Motor neuron (in vitro differentiated cells): ENCODE measurements at regions of chr1 and their contacts with region 1.

Region 1: GRCh38 chr1:89762779-89763648 is 57.8 kb upstream of the LRRC8D start:
- ATAC-seq: peak; percentile 98 to 100 (median 100)
- H3K4me3 ChIP-seq: peak overlapping the region; percentile 32 to 43 (median 38)
- H3K27ac ChIP-seq: no peak overlapping the region
- H3K4me1 ChIP-seq: no peaks in the 10 kb centered on the region

Region 2: DNA sequence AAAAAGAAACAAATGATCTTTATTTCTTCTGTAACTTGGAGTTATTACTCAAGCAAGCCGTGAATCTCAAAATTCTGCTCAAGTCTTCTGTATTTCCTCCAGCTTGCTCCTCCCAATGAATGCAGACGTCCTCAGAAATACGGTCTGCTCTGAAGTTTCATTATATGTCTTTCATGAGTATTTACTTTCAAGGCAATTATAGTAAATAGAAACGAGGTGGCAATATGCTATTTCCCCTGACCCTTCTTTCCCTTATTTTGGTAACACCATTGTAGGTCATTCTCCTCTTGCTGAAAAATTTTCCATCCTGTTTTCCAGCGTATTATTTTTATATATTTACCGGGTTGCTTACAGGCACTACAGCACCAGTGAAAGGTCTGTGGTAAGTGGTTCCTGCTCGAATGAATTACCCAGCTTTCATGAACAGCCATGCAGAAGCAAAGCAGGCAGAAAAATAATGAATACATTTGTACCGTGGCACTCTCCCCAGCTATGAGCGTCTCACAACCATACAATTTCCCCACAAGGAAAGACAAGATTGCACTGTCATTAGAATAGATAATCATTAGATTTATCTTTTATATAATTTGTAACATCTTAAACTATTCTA is 1429.8 kb before region 1 on chr1:
- in situ Hi-C with region 1: no loop called
- ATAC-seq: no peak
- H3K4me3 ChIP-seq: no peak overlapping the region
- H3K27ac ChIP-seq: no peak overlapping the region
- H3K4me1 ChIP-seq: peaks cover 0 to 5% of the 10 kb centered on the region in 2 donors

Region 3: DNA sequence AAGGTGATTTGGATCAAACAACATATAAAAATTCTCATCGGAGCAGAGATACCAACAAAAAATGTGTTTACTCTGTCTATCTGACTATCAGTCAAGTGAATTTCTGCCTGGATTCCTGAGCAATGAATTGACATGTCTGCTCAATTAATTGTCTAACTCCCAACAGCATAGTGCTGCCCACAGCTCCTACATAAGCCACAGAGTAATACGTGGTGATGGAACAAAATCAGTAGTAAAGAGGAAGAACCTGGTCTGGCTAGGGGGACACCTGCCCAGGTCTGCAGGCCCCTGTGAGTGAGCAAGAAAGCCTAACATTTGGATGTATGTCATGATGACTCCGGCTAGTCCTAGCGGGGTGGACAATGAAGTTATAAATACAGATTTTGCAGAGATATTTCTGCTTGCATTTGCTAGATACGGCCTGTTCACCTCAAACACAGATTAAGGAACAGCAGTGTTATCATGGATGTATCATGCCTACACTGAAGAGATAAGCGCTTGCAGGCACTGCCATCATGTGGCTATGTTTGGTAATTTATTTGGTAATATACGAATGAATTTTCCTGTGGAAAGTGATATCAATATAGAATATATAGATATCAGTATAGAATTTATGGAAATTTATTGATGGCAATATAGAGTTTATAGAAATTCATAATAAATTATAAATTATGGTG is 308.0 kb before region 1 on chr1:
- in situ Hi-C with region 1: loop called in 1 of 9 experiments (anchors 25 kb)
- ATAC-seq: peak; percentile 56 to 90 (median 81)
- H3K4me3 ChIP-seq: no peak overlapping the region
- H3K27ac ChIP-seq: no peak overlapping the region
- H3K4me1 ChIP-seq: peaks cover 0 to 3% of the 10 kb centered on the region in 2 donors

Region 4: DNA sequence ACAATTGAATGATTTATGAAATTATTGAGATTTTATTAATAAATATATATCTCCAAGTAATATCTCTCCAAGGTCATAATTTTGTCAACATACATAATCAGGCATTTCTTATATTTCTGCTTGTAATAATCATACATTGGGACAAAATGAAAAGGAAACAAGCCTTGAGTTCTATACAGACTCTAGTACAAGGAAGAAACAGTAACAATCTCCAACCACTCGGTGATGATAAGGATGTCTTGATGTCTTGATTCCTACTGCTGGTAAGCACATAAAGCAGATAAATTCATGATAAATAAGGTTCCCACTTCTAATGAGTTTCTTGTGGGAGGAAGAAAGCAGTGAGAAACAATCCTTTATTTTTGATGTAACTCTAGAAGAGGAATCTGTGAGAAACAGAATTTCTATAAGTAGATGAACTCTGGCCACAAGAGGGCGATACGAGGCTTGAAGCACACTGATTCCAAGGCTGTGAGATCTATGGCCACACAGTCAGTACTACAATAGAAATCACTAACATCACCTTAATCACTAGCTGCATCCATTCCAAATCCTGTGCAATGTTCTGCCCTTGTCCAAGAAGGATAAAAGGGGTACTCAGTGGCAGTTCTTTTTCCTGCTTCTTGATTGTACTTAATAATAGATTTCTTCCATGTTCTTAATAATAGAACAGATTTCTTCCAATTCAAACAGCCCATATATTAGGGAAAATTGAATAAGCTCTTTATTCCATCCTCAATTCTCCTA is 279.8 kb before region 1 on chr1:
- in situ Hi-C with region 1: loop called in 2 of 9 experiments (anchors 25 kb)
- ATAC-seq: peak; percentile 83 to 95 (median 88)
- H3K4me3 ChIP-seq: no peak overlapping the region
- H3K27ac ChIP-seq: no peak overlapping the region
- H3K4me1 ChIP-seq: no peaks in the 10 kb centered on the region

Region 5: DNA sequence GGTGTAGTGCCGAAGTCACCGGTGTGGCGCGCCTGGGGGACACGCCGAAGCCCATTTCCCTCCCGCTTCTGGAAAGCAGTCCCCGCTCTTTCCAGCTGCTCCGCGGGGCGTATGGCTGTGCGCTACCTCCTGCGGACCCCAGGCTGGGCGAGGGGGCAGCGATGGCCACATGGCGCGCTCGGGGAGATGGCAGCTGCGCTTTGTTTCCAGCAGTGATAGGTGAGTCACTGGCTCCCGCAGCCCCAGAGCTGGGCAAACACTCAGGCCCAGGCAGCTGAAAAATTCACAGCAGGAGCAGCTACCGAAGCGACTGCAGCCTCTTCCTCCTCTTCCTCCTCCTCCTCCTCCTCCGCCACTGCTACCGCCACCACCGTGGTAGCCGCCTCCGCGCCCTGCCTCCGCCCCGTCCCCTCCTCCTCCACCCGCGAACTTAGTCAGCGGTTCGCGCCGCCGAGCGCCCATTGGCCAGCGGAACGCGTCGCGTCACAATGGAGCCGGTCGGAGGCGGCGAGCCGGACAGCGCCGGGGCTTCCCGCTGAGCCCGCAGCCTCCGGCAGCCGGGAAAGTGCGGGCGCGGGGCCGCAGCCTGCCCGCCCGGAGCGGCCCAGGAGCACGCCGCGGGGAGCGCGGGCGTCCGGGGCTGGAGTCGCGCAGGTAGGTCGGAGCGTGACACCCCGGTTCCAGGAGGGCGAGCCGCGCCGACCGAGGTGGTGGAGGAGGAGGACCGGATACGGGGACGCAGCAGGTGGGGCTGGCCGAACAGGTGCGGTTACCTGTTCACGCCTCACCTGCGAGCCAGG is 238.4 kb before region 1 on chr1 and contains the start of gene LRRC8B:
- in situ Hi-C with region 1: loop called in 1 of 9 experiments (anchors 25 kb)
- ATAC-seq: peak; percentile 90 to 98 (median 92)
- H3K4me3 ChIP-seq: peak within 1 kb of the TSS; percentile 76 to 92 (median 91)
- H3K27ac ChIP-seq: peak within 1 kb of the TSS; percentile 87 to 89
- H3K4me1 ChIP-seq: peaks cover 25% of the 10 kb centered on the region in 2 donors
- total RNA-seq, gene LRRC8B: 4.2 to 37.3 (median 16.5) TPM

Region 6: DNA sequence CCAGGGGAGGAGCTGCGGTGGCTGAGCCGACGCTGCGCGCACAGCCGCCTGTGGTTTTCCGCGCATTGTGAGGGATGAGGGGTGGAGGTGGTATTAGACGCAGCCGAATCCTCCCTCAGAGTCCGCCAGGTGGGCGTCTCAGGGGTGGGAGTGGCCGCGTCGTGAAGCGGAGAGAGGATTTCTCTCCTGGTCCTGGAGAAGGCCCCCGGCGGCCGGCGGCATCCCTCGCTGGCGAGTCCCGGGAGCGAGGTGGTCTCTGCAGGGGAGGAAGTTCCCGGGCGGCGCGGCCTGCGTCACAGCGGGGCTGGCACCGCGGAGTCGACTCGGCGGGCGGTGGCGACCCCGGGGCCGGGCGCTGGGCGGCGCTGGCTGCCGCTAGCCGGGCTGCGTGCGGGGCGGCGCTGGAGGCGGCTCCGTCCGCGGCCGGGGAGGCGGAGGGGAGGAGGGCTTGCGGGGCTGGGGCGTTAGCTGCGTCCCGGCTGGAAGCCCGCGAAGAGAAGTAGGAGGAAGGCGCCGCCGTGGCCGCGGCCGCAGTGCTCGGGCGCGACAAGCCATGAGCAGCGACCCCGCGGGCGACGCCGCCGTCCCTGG is 130.3 kb before region 1 on chr1 and contains the start of gene LRRC8C:
- in situ Hi-C with region 1: loop called in 3 of 9 experiments (anchors 10 to 25 kb)
- ATAC-seq: peak; percentile 90 to 96 (median 92)
- H3K4me3 ChIP-seq: peak within 1 kb of the TSS; percentile 65 to 85 (median 75)
- H3K27ac ChIP-seq: peak within 1 kb of the TSS; percentile 27 to 55
- H3K4me1 ChIP-seq: peaks cover 5 to 8% of the 10 kb centered on the region in 2 donors
- total RNA-seq, gene LRRC8C: 1.7 to 8.0 (median 2.5) TPM